Caco-2 (cell line): ENCODE measurements at regions of chr22 and their contacts with region 1.

Region 1: DNA sequence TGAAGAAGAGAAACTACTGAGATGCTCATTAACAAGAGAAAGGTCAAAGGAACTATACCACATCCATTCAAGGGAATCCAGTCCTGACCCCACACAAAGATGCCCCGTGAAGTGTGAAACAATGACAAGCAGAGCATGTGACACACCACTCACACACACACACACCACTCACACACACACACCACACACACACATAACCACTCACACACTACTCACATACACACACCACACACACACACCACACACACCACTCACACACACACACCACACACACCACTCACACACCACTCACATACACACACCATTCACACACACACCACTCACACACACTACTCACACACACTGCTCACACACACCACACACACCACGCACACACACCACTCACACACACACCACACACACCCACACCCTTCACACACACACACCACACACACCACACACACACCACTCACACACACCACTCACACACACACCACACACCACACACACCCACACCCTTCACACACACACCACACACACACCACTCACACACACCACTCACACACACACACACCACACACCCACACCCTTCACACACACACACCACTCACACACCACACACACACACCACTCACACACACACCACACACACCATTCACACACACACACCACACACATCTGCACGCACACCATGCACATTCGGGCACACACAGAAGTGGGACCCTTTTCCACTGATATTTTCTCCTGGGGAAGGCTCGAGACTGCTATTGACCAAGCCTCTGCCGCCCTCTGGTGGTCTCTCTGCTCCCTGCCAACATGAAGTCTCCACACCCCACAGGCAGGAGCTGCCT is 32.0 kb upstream of the COMT start:
- DNase-seq: peak; percentile 80 to 83
- H3K4me3 ChIP-seq: no peak overlapping the region
- H3K4me3 Mint-ChIP-seq: no peak overlapping the region
- H3K27ac Mint-ChIP-seq: peak overlapping the region; percentile 15
- H3K4me1 ChIP-seq: no peaks in the 10 kb centered on the region
- H3K4me1 Mint-ChIP-seq: peaks cover 7% of the 10 kb centered on the region
- H3K27me3 ChIP-seq: no peaks in the 10 kb centered on the region
- H3K27me3 Mint-ChIP-seq: no peaks in the 10 kb centered on the region
- CTCF ChIP-seq: peak; percentile 75 to 95

Region 2: DNA sequence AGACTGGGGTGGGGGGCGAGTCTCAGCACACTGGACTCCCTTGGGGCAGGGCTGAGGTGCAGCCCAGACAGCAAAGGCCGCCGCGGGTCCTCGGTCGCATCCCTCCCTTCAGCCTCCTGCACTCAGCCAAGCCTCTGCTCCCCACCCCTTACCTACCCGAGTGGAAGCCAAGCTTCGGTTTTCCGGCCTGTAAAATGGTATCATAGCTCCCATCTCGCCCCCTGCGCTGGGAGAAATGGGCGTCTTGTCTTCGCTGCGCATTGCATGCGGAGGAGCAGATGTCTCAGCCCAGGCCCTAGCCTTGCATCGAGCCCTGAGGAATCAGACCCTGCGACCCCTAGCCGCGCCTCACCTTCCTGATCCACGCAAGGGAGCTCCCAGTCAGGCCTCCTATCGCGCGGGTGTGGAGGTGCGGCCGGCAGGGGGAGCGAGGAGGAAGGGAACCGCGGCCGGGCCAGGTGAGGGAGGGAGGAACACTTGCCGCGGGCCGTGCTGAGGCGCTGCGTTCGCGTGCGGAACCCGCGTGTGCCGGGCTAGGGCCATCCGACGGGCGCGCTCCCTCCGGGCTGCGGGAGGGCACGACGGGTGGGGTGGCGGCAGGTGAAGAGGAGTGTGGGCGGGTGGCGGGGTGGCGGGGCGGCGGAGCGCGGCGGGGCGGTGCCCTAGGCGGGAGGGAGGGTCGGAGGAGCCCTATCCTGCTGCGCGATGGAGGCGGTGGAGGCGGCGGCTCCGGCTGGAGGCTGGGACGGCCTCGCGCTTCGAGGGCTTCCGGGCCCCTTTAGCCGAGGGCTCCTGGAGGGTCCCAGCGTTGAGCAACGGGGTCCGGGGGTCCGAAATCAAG is 153.1 kb before region 1 on chr22:
- CTCF ChIA-PET with region 1: interaction called, 20 read pairs
- POLR2A ChIA-PET with region 1: no interaction called
- intact Hi-C with region 1: loop called (anchors 1 kb)
- DNase-seq: peak; percentile 76 to 83
- H3K4me3 ChIP-seq: peak overlapping the region; percentile 35
- H3K4me3 Mint-ChIP-seq: peak overlapping the region; percentile 67
- H3K27ac Mint-ChIP-seq: no peak overlapping the region
- H3K4me1 ChIP-seq: peaks cover 18% of the 10 kb centered on the region
- H3K4me1 Mint-ChIP-seq: peaks cover 17% of the 10 kb centered on the region
- H3K27me3 ChIP-seq: no peaks in the 10 kb centered on the region; the same call in 1 of the 2 replicates
- H3K27me3 Mint-ChIP-seq: peaks cover 7% of the 10 kb centered on the region
- CTCF ChIP-seq: peak; percentile 66 to 82

Region 3: DNA sequence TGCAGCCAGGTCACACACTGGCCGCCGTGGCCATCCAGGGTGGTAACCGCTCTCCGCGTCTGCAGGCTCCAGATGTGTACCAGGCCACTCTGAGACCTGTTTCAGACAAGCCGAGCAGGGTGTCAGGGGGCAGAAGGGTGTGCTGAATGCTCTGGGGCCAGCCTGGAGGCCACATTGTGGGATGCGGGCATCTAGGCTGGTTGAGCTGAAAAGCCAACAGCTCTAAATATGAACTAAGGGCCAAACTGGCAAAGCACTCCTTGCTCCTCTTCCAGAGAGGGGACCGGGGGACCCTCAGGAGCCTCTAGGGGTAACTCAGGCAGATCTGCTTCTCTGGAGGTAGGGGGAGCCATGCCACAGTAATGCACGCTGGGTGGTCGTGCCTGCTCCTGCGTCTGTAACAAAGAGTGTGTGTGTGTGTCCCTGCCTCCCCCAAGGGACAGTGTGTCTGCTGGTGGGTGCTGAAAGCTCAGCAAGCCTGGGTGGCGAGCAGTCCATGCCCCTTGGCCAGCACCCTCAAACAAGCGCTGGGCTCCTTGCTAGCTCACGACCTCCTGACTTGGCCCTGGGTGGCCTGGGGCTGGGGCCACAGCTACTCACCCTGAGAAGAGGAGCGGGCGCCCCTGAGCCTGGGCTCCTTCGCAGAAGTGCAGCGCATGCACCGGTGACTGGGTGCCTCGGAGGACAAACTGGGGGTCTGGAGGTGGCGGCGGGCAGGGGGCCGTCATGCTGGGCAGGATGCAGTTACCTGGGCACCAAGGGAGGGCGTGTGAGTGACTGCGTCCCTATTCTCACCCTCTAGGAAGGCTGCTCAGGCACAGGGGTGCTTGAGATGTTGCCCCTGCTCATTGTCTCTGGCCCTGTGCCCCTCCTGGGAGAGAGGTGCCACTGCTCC is 88.7 kb before region 1 on chr22:
- CTCF ChIA-PET with region 1: no interaction called
- POLR2A ChIA-PET with region 1: no interaction called
- intact Hi-C with region 1: loop called (anchors 1 kb)
- DNase-seq: no peak
- H3K4me3 ChIP-seq: no peak overlapping the region
- H3K4me3 Mint-ChIP-seq: no peak overlapping the region
- H3K27ac Mint-ChIP-seq: no peak overlapping the region
- H3K4me1 ChIP-seq: peaks cover 14% of the 10 kb centered on the region
- H3K4me1 Mint-ChIP-seq: peaks cover 6% of the 10 kb centered on the region
- H3K27me3 ChIP-seq: no peaks in the 10 kb centered on the region
- H3K27me3 Mint-ChIP-seq: no peaks in the 10 kb centered on the region
- CTCF ChIP-seq: peak; percentile 5 to 24

Region 4: DNA sequence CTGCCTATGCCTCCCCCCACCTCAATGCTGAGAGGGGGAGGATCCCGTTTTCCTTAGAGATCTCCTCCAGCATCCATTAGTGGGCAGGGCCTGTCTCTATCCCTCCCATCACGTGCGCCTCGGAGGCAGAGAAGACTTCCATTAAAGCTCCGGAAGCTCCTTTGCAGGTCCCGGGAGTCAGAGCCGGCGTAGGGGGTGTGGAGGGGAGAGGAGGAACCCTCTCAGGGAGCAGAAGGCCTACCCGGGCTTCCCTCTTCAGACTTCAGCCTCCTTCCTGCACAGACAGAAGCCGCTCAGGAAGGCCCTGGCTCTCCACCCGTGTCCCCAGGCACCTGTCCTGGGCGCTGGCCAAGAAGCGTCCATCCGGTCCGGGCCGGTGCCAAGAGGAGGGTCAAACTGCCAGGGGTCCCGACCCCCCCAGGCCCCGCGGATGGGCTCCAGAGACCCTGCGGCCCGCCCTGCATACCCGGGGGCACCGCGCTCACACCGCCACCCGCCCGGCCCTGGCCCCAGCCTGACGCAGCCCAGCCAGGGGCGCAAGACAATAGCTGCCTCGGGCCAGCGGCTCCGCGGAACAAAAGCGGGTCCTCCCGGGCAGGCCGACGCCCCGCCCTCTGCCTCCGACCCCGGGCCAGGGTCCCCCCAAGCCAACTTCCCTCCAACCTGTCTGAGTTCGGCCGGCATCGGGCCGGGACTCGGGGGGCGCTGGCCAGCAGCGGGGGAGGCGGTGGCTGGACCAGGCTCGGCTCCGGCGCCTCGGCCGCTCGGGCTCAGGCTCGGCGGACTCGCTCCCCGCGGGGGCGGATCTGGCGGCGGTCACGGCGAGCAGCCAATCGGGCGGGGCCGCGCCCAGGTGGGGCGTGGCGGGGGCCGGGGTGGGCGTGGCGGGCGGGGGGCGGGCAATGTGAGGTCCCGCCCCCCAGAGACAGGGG is 77.1 kb after region 1 on chr22:
- CTCF ChIA-PET with region 1: no interaction called
- POLR2A ChIA-PET with region 1: no interaction called
- intact Hi-C with region 1: no loop called
- DNase-seq: peak in 1 of 2 experiments; percentile 80
- H3K4me3 ChIP-seq: peak overlapping the region; percentile 50
- H3K4me3 Mint-ChIP-seq: peak overlapping the region; percentile 40
- H3K27ac Mint-ChIP-seq: no peak overlapping the region
- H3K4me1 ChIP-seq: no peaks in the 10 kb centered on the region
- H3K4me1 Mint-ChIP-seq: no peaks in the 10 kb centered on the region
- H3K27me3 ChIP-seq: no peaks in the 10 kb centered on the region
- H3K27me3 Mint-ChIP-seq: no peaks in the 10 kb centered on the region
- CTCF ChIP-seq: no peak